ENCODE measurements at regions of chr1 and their contacts with region 1.

Region 1: GRCh38 chr1:192550922-192551534 is 24.5 kb upstream of the RGS1 start:
- DNase-seq: peak; percentile 89
- ATAC-seq: peak; percentile 56
- H3K4me3 ChIP-seq: no peak overlapping the region
- H3K27ac ChIP-seq: peak overlapping the region; percentile 88
- H3K4me1 ChIP-seq: peaks cover 48% of the 10 kb centered on the region
- H3K27me3 ChIP-seq: no peaks in the 10 kb centered on the region
- CTCF ChIP-seq: no peak
- EP300 ChIP-seq: peak; percentile 71 to 85; a peak in 2 of 4 replicates
- POLR2A ChIP-seq: 0 out of 2 replicates have a peak, but pooled peaks have one; percentile 13
- RAD21 ChIP-seq: no peak

Region 2: GRCh38 chr1:192530254-192530653 is 20.8 kb before region 1 on chr1:
- CTCF ChIA-PET with region 1: no interaction called
- POLR2A ChIA-PET with region 1: interaction called, 6 read pairs
- RAD21 ChIA-PET with region 1: interaction called, 12 read pairs
- SMC1A ChIA-PET with region 1: interaction called, 77 read pairs
- in situ Hi-C with region 1: no loop called
- intact Hi-C with region 1: no loop called
- DNase-seq: peak; percentile 93
- ATAC-seq: peak; percentile 95
- H3K4me3 ChIP-seq: no peak overlapping the region
- H3K27ac ChIP-seq: peak overlapping the region; percentile 51; the same call in 1 of the 2 replicates
- H3K4me1 ChIP-seq: peaks cover 16% of the 10 kb centered on the region
- H3K27me3 ChIP-seq: no peaks in the 10 kb centered on the region; a peak in 1 of 4 replicates
- CTCF ChIP-seq: no peak
- EP300 ChIP-seq: peak; percentile 81 to 92; a peak in 3 of 4 replicates
- POLR2A ChIP-seq: no peak
- RAD21 ChIP-seq: no peak; the same call in 1 of the 2 replicates

Region 3: GRCh38 chr1:192566657-192567056 is 15.6 kb after region 1 on chr1:
- CTCF ChIA-PET with region 1: interaction called, 4 read pairs
- POLR2A ChIA-PET with region 1: interaction called, 10 read pairs
- RAD21 ChIA-PET with region 1: interaction called, 11 read pairs
- SMC1A ChIA-PET with region 1: interaction called, 58 read pairs
- in situ Hi-C with region 1: no loop called
- intact Hi-C with region 1: no loop called
- DNase-seq: no peak
- ATAC-seq: peak; percentile 56
- H3K4me3 ChIP-seq: no peak overlapping the region
- H3K27ac ChIP-seq: no peak overlapping the region
- H3K4me1 ChIP-seq: no peaks in the 10 kb centered on the region
- H3K27me3 ChIP-seq: no peaks in the 10 kb centered on the region
- CTCF ChIP-seq: no peak
- EP300 ChIP-seq: no peak
- POLR2A ChIP-seq: no peak
- RAD21 ChIP-seq: no peak

Region 4: DNA sequence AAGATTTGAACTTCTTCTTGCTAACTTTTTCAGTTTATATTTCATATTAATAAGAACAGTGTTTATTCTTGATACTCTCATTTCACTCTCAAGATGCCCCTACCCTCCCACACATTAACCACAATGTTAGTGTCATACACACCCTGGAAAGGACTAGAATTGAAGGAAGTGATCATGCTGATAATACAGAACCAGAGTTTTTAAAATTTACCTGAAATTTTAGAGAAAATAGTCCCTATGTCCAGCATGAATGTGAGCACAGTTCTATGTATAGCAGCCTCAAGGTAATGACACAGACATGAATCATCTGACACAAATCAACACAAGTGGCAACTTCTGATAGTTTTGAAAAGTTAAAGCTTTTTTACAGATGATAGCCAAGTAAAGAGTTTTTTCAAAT is 50.5 kb after region 1 on chr1:
- CTCF ChIA-PET with region 1: interaction called, 8 read pairs
- POLR2A ChIA-PET with region 1: interaction called, 8 read pairs
- RAD21 ChIA-PET with region 1: interaction called, 37 read pairs
- SMC1A ChIA-PET with region 1: interaction called, 59 read pairs
- in situ Hi-C with region 1: loop called (anchors 5 kb)
- intact Hi-C with region 1: no loop called
- DNase-seq: no peak
- ATAC-seq: peak; percentile 43
- H3K4me3 ChIP-seq: no peak overlapping the region
- H3K27ac ChIP-seq: no peak overlapping the region
- H3K4me1 ChIP-seq: peaks cover 10% of the 10 kb centered on the region; the same call in 1 of the 2 replicates
- H3K27me3 ChIP-seq: no peaks in the 10 kb centered on the region
- CTCF ChIP-seq: no peak
- EP300 ChIP-seq: no peak; a peak in 1 of 4 replicates
- POLR2A ChIP-seq: no peak
- RAD21 ChIP-seq: no peak